ENCODE measurements at regions of chr12 and their contacts with region 1.

Region 1: DNA sequence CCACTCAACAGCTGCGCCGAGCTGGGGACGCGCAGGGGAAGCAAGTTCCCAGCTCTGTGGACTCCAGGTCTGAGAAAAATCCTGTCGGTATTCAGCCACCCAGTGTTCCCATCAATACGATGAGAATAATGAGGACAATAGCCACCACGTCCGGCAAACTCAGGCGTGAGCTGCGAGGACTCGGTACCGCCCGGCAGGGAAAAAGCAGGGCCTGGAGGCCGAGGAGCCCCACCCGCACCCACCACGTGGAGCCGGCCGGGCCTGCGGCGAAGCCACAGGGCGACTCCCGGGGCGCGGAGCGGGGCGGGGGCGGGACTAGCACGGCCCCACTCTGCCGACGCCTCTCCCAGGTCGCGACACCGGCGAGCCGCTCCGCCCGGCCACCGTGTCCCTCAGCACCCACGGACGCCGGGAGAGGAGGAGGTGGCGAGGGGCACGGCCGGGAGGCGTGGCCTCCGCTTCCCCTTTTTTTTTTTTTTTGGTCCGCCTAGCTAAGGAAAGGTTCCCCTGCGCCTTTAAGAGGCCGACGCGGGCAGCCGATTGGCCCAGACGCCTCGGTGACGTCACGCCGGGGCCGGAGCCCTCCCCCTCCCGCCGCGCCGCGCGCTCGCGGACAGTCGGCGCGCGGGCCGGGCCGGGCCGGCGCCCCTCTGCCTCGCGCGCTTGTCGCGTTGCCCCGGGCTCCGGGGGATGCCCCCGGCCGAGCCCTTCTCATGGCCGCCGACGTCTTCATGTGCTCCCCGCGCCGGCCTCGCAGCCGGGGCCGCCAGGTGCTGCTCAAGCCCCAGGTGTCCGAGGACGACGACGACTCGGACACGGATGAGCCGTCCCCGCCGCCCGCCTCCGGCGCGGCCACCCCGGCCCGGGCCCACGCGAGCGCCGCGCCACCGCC is at the start of gene MLXIP:
- DNase-seq: peak; percentile 94
- ATAC-seq: peak; percentile 87
- H3K4me3 Mint-ChIP-seq: peak within 1 kb of the TSS; percentile 84
- H3K27ac Mint-ChIP-seq: peak within 1 kb of the TSS; percentile 88
- H3K4me1 Mint-ChIP-seq: peaks cover 43% of the 10 kb centered on the region
- H3K27me3 Mint-ChIP-seq: peaks cover under 1% of the 10 kb centered on the region
- total RNA-seq, gene MLXIP: 36.1 to 36.4 TPM

Region 2: DNA sequence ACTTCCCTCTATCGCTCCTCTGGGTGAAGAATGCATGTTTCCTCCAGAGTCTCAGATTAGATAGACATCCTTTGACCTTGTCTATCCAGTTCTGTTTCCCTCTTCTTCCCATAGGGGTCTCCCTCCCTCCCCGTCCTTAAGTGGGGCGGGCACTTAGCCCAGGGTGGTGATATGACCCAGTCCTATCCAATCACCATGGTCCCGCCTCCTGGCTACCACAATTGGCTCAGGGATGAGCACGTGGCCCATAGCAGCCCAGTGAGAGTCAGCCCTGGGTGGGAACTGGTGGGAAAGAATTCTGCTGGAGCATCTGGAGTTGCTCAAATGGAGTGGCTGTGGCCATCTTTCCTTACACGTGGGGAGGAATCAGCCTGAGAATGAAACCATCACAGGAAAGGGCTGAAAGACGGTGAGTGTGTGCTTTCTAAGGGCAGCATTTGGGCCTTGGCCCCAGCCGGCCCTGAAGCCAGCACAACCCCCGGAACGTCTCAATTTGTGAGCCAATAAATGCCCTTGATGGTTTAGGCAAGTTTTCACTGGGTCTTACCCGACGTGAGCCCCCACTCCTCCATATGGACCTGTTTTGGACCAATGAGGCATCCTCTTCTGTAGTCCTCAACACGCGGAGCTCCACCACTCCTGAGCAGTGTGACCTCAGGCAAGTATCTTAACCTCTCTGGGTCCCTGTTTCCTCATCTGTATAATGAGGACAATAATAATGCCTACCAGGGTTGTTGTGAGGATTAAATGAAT is 14.2 kb before region 1 on chr12:
- CTCF ChIA-PET with region 1: interaction called, 14 read pairs
- DNase-seq: peak; percentile 50
- ATAC-seq: peak; percentile 70
- H3K4me3 Mint-ChIP-seq: no peak overlapping the region
- H3K27ac Mint-ChIP-seq: no peak overlapping the region
- H3K4me1 Mint-ChIP-seq: peaks cover 13% of the 10 kb centered on the region
- H3K27me3 Mint-ChIP-seq: no peaks in the 10 kb centered on the region

Region 3: GRCh38 chr12:122097927-122098756 is 19.8 kb after region 1 on chr12:
- CTCF ChIA-PET with region 1: interaction called, 18 read pairs
- DNase-seq: no peak
- ATAC-seq: no peak
- H3K4me3 Mint-ChIP-seq: no peak overlapping the region
- H3K27ac Mint-ChIP-seq: no peak overlapping the region
- H3K4me1 Mint-ChIP-seq: peaks cover 41% of the 10 kb centered on the region
- H3K27me3 Mint-ChIP-seq: no peaks in the 10 kb centered on the region

Region 4: DNA sequence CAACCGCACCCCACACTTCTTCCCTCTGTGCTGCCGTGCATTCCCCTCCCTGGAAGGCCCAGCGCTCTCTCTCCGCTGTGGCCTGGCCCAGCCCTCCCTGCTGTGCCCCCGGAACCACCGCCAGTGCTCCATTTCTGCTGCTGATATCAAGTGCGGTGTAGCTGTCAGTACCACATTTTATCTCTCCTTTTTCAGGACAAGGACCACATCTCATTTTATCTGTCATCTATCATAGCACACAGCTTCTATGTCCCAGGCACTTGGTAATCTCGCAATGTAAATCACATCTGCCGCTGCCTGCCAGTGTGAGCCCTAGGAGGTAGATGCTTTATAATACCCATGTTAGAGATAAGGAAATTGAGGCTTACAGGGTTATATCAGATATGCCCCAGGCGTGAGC is 77.3 kb after region 1 on chr12:
- CTCF ChIA-PET with region 1: no interaction called
- DNase-seq: no peak
- ATAC-seq: no peak
- H3K4me3 Mint-ChIP-seq: no peak overlapping the region
- H3K27ac Mint-ChIP-seq: no peak overlapping the region
- H3K4me1 Mint-ChIP-seq: peaks cover under 1% of the 10 kb centered on the region
- H3K27me3 Mint-ChIP-seq: peaks cover 35% of the 10 kb centered on the region

Region 5: GRCh38 chr12:122651520-122652224 is 573.3 kb after region 1 on chr12:
- CTCF ChIA-PET with region 1: no interaction called
- DNase-seq: no peak
- ATAC-seq: no peak
- H3K4me3 Mint-ChIP-seq: no peak overlapping the region
- H3K27ac Mint-ChIP-seq: no peak overlapping the region
- H3K4me1 Mint-ChIP-seq: peaks cover 9% of the 10 kb centered on the region
- H3K27me3 Mint-ChIP-seq: no peaks in the 10 kb centered on the region